GM13976 (cell line): ENCODE measurements at regions of chr16 and their contacts with region 1.

Region 1: GRCh38 chr16:56317998-56318826 is 107.1 kb downstream of the AMFR start:
- DNase-seq: peak; percentile 94
- CTCF ChIP-seq: peak; percentile 84

Region 2: DNA sequence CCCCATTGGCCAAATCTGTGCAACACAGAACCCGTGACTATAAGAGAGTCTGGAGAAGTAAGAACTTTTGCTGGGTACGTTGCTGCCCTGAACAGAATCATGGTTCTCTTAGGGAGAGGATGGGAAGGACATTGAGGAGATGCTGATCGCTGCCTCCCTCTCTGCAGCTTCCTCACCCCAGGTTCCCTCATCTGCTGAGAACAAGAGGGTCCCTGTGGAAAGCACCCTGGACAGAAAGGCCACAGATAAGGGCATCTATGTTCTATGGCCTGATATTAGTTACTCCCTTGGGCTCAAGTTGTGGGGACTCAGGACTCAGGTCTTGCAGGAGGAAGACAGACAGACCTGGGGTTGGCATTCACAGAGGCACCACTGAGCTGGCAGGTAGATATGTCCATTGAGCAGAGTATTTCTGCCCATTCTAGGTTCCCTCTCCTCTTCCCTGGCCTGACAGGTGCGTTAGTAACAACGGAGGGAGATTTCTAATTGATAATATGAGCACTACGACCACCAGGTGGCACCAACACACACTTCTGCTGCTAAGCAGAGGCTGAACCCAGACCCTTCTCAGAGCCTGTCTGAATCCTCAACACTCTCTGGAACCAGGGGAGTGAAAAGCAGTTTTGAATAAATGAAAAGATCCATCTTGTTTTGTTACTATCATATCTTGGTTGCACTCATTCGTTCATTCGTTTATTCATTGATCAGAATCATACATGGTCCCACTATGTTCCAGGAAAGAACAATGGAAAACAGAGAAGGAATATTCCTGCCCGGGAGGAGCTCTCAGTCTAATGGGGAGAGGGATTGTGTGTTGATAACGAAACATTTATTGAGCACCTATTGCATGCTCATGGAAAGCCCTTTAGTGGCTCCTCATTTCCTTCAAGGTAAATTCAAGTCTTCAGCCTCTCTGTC is 606.0 kb before region 1 on chr16:
- in situ Hi-C with region 1: loop called (anchors 25 kb)
- DNase-seq: peak; percentile 53
- CTCF ChIP-seq: peak; percentile 53

Region 3: DNA sequence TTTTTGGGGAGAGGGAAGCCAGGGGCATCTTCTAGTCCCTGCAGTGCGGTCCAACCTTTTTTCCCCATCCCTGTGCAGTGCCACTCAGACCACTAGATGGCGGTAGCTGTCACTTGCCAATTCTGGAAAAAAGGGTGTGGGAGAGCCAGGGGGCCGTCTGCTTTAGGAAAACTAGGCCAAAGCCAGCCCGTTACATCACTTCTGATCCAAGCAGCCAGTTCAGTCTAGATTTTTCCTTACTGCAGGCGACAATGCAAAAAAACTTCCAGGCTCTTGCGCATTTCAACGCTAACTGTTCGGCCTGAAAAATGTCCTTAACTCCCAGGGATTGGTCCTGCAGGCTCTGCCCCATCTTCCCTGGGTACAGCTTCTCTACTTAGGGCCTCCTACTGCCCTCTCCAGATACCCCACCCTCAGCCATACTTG is 373.8 kb before region 1 on chr16:
- in situ Hi-C with region 1: loop called (anchors 10 kb)
- DNase-seq: peak; percentile 22
- CTCF ChIP-seq: peak; percentile 90

Region 4: GRCh38 chr16:56041686-56042085 is 276.5 kb before region 1 on chr16:
- in situ Hi-C with region 1: loop called (anchors 25 kb)
- DNase-seq: peak; percentile 41
- CTCF ChIP-seq: peak; percentile 47

Region 5: DNA sequence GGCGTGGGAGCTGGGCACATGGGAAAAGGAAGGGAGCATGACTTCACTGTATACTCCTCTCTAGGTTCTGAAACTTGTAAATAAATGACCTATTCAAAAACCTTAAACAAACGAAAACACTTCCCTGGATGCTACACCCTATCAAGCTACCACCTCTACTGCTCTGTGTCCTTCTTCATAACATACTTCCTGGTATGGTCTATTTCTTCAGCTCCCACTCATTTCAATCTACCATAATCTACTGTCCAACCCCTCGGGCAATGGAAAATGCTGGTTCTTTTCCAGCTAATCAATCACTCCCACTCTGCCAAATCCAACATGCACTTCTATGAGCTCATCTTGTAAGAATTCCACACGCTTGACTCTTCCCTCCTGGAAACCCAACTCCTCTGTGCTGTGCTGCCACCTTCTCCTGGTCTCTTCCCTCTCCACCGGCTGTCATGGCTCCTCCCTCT is 64.7 kb after region 1 on chr16:
- in situ Hi-C with region 1: no loop called
- DNase-seq: no peak
- CTCF ChIP-seq: no peak